Heart right ventricle (tissue), 16 donors: ENCODE measurements at regions of chr1 and their contacts with region 1.

Region 1: DNA sequence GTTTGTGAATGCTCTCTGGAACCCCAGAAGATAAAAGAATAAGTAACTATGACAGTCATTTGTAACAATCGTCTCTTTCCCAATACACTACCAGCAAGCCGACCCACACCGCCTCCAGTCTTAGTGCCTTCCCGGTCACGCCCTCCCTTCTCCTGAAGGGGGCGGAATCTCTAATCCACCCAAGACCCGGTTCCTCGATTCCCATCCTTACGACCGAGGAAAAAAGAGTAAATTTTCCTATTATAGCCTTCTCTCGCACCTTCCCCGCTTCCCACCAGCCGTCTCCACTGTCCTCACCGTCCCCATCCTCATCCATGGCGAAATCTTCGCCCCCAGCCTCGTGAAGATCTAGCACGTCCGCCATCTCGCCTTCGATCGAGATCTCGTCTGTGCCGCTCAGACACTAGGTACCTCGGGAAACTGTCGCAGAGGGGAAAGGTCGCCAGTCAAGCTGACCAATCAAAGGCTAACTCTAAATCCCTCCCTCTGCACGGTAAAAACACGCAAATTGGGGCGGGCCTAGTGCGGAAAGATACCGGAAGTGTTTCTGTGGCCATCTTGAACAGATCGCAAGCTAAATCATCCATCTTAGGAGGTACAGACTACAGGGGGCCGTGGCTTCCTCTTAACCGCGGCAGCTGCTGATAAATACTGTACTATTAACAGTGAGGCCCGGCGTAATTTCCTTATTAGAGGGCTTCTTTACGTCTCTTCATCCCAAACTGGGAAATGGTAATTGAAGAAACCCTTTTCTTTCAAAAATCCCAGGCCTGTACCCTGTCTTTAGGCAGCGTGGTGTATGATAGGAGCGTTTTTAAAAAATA is at the start of gene RBM8A:
- DNase-seq: peak; percentile 86 to 98
- ATAC-seq: peak; percentile 96 to 99 (median 99)
- H3K4me3 ChIP-seq: peak within 1 kb of the TSS; percentile 54 to 82 (median 72)
- H3K27ac ChIP-seq: peak within 1 kb of the TSS; percentile 58 to 98 (median 94)
- H3K4me1 ChIP-seq: peaks cover 6 to 20% (median 17%) of the 10 kb centered on the region in 9 donors
- H3K27me3 ChIP-seq: no peaks in the 10 kb centered on the region
- CTCF ChIP-seq: peak; percentile 33 to 75 (median 63)
- total RNA-seq, gene RBM8A: 55.5 to 90.5 (median 67.4) TPM

Region 2: DNA sequence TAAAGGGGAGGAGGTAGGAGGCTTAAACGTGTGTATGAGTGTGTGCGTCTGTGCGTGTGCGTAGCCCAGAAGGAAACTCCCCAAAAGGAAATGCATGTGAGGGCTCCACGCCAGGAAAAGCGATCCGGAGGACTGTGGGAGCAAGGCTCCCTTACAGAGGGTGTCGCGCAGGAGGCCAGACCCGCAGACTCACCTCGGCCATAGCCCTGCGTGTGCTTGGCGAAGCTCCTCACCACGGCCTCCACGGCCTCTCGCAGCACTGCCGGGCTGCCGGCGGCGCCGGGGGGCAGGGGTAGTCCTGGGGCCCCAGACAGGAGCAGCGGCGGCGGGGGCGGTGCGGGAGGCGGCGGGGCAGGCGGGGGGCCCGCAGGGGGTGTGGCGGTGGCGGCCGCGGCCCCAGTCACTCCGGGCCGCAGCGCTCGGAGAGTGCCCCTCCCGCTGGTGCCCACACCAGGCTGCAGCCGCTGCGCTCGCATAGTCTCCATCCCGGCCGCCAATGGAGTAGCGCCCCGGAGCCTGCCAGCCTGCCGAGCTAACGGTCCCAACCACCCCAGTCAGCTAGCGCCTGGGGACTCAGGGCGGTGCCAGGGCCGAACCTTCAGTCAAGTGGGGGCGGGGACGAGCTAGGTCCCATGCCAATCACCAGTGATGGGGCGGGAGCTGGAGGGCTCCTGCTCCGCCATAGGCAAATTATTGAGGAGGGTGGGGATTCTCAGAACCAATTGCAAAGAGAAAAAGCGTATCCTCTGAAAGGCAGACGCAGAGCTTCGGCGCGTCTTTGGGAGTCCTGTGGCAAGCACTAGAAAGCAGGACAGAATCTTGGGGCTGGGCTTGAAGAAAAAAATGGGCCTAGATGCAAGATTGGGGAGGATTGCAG is 30.4 kb after region 1 on chr1 and contains the start of gene LIX1L:
- intact Hi-C with region 1: loop called in 7 of 10 experiments (anchors 1 to 5 kb)
- DNase-seq: peak; percentile 96 to 98
- ATAC-seq: peak; percentile 84 to 90 (median 88)
- H3K4me3 ChIP-seq: peak within 1 kb of the TSS; percentile 56 to 88 (median 68)
- H3K27ac ChIP-seq: peak within 1 kb of the TSS; percentile 92 to 100 (median 98)
- H3K4me1 ChIP-seq: peaks cover 5 to 84% (median 74%) of the 10 kb centered on the region in 9 donors
- H3K27me3 ChIP-seq: peaks cover 0 to 9% (median 0%) of the 10 kb centered on the region in 7 donors
- CTCF ChIP-seq: no peak
- total RNA-seq, gene LIX1L: 21.2 to 30.0 (median 24.5) TPM

Region 3: GRCh38 chr1:145963995-145964901 is 37.0 kb after region 1 on chr1 and contains the starts of genes ANKRD34A and POLR3GL:
- intact Hi-C with region 1: loop called in 3 of 10 experiments (anchors 5 kb)
- DNase-seq: peak; percentile 93 to 98
- ATAC-seq: peak; percentile 79 to 90 (median 85)
- H3K4me3 ChIP-seq: peak within 1 kb of the TSS; percentile 50 to 74 (median 65)
- H3K27ac ChIP-seq: peak within 1 kb of the TSS; percentile 62 to 96 (median 91)
- H3K4me1 ChIP-seq: peaks cover 14 to 59% (median 49%) of the 10 kb centered on the region in 9 donors
- H3K27me3 ChIP-seq: peaks cover 0 to 9% (median 0%) of the 10 kb centered on the region in 7 donors
- CTCF ChIP-seq: no peak
- total RNA-seq, gene ANKRD34A: 0.66 to 1.5 (median 1.0) TPM
- total RNA-seq, gene POLR3GL: 30.9 to 44.7 (median 38.5) TPM